Breast epithelium (tissue), 4 donors: ENCODE measurements at regions of chr2 and their contacts with region 1.

Region 1: DNA sequence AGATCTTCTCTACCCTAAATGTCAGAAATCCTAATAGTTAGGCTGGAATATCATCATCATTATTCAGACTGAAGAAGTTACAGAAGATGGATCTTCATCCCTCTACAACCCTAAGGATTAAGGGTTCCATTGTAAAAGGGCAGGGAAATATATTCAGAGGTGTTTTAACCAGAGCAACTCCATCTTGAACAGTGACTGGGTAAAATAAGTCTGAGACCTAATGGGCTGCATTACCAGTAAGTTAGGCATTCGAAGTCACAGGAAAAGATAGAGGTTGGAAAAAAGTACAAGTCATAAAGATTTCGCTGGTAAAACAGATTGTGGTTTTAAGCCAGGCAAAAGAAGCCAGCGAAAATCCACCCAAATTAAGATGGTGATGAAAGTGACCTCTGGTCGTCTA is 968.7 kb downstream of the CNTNAP5 start:
- DNase-seq: no peak
- H3K4me3 ChIP-seq: no peak overlapping the region
- H3K27ac ChIP-seq: no peak overlapping the region
- H3K4me1 ChIP-seq: no peaks in the 10 kb centered on the region
- H3K27me3 ChIP-seq: no peaks in the 10 kb centered on the region
- CTCF ChIP-seq: no peak
- POLR2A ChIP-seq: no peak

Region 2: DNA sequence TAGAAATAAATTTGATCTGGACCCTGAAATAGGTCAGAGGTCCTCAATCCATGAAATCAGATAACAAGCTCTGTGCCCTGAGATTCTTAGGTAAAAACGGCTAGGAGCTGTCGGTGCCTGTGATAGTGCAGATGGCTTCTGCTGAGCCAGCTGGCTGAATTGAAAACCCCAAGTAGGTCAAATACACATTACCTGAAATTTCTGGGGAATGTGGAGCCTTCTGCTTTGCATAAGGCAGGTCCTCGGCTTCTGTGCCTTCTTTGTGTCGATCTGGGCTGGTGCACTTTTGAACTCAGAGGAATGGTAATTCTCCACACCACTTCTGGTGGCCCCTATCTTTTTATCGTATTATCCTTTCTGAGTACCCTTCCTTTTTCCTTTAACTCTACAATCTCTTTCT is 902.1 kb before region 1 on chr2:
- intact Hi-C with region 1: loop called (anchors 5 kb)
- DNase-seq: no peak
- H3K4me3 ChIP-seq: no peak overlapping the region
- H3K27ac ChIP-seq: no peak overlapping the region
- H3K4me1 ChIP-seq: no peaks in the 10 kb centered on the region
- H3K27me3 ChIP-seq: no peaks in the 10 kb centered on the region
- CTCF ChIP-seq: no peak
- POLR2A ChIP-seq: no peak

Region 3: GRCh38 chr2:125553768-125554167 is 560.0 kb after region 1 on chr2:
- intact Hi-C with region 1: no loop called
- DNase-seq: no peak
- H3K4me3 ChIP-seq: no peak overlapping the region
- H3K27ac ChIP-seq: no peak overlapping the region
- H3K4me1 ChIP-seq: no peaks in the 10 kb centered on the region
- H3K27me3 ChIP-seq: no peaks in the 10 kb centered on the region
- CTCF ChIP-seq: no peak
- POLR2A ChIP-seq: no peak